PC-9 (cell line): ENCODE measurements at regions of chr10 and their contacts with region 1.

Region 1: DNA sequence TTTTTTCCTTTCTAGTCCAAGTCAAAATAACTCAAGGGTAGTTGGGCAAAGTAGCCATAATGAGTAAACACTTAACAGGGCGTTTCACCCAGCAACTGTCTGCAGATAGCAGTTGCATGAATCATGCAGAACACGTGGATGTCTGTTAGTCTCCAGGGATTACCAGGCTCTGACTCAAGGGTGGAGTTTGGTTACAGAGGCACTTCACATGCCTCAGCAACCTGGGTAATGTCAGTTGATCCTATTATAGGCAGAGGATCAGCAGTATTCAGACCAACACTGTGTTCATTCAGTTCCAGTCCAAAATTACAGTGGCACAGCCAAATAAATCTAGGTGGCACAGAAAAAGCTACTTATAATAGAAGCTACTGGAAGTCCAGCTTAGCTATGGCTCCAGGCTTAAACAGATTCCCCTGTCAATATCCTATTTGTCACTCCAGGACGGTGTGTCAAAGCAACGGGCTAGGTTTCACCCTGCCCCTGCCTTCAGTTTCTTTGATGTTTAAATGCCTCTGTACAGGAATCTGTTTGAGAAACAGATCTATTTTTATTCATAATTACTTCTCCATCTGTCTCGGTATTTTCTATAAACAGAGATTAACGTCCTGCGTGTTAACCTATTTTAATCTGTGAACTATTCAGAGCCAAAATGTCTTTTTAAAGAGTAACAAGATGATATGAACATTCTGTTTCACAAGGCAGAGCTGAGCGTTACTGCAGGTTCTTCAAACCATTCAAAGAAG is 162.7 kb upstream of the AKR1E2 start:
- DNase-seq: peak; percentile 75 to 94
- H3K4me3 ChIP-seq: peak overlapping the region; percentile 17; the same call in 1 of the 2 replicates
- H3K27ac ChIP-seq: peak overlapping the region; percentile 96
- H3K4me1 ChIP-seq: peaks cover 24% of the 10 kb centered on the region
- H3K27me3 ChIP-seq: no peaks in the 10 kb centered on the region
- CTCF ChIP-seq: no peak

Region 2: GRCh38 chr10:3887885-3888476 is 775.4 kb before region 1 on chr10:
- CTCF ChIA-PET with region 1: no interaction called
- POLR2A ChIA-PET with region 1: no interaction called
- intact Hi-C with region 1: loop called (anchors 2 kb)
- DNase-seq: peak; percentile 50 to 89
- H3K4me3 ChIP-seq: no peak overlapping the region
- H3K27ac ChIP-seq: peak overlapping the region; percentile 90
- H3K4me1 ChIP-seq: peaks cover 41% of the 10 kb centered on the region
- H3K27me3 ChIP-seq: no peaks in the 10 kb centered on the region
- CTCF ChIP-seq: no peak

Region 3: GRCh38 chr10:4260483-4261124 is 402.7 kb before region 1 on chr10:
- CTCF ChIA-PET with region 1: no interaction called
- POLR2A ChIA-PET with region 1: no interaction called
- intact Hi-C with region 1: no loop called
- DNase-seq: no peak
- H3K4me3 ChIP-seq: no peak overlapping the region
- H3K27ac ChIP-seq: no peak overlapping the region
- H3K4me1 ChIP-seq: no peaks in the 10 kb centered on the region
- H3K27me3 ChIP-seq: no peaks in the 10 kb centered on the region
- CTCF ChIP-seq: no peak

Region 4: DNA sequence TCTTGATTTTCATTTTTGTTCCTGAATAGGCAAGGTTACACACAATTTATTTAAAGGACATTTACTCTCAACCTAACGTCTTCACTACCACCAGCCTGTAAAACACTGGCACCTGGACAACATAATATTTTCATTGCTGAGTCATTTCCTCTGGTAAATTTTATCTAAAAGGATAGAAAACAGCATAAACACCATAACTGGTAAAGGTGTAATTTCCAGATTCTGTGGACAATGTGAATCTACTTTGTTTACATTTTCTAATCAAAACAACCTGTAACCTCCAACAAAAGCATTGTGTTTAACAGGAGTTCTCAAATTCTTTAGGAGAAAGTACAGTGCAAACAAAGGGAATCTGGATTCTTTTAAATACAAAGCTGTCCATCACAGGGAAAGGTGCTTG is 309.4 kb before region 1 on chr10:
- CTCF ChIA-PET with region 1: no interaction called
- POLR2A ChIA-PET with region 1: interaction called, 7 read pairs
- intact Hi-C with region 1: loop called (anchors 2 kb)
- DNase-seq: peak in 1 of 2 experiments; percentile 59
- H3K4me3 ChIP-seq: no peak overlapping the region
- H3K27ac ChIP-seq: peak overlapping the region; percentile 76
- H3K4me1 ChIP-seq: peaks cover 18% of the 10 kb centered on the region
- H3K27me3 ChIP-seq: no peaks in the 10 kb centered on the region
- CTCF ChIP-seq: no peak

Region 5: DNA sequence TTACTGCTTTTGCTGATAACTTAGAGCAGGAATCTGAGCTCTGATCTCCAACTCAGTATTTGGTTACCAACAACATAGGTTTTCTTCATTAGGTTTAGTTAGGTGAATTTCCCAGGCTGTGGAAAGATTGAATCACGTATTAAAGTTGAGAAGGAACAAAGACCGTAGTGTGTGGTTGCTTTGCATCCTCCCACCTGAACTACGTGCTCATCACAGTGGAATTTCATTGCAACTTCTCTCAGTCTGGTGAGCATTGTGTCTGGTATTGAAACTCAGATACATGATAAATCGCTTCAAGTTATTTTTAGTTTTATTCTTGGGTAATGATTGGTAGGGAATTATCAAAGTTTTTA is 23.3 kb after region 1 on chr10:
- CTCF ChIA-PET with region 1: interaction called, 6 read pairs
- POLR2A ChIA-PET with region 1: interaction called, 5 read pairs
- intact Hi-C with region 1: loop called (anchors 2 kb)
- DNase-seq: peak in 1 of 2 experiments; percentile 88
- H3K4me3 ChIP-seq: no peak overlapping the region
- H3K27ac ChIP-seq: peak overlapping the region; percentile 78
- H3K4me1 ChIP-seq: peaks cover 21% of the 10 kb centered on the region
- H3K27me3 ChIP-seq: no peaks in the 10 kb centered on the region
- CTCF ChIP-seq: no peak

Region 6: DNA sequence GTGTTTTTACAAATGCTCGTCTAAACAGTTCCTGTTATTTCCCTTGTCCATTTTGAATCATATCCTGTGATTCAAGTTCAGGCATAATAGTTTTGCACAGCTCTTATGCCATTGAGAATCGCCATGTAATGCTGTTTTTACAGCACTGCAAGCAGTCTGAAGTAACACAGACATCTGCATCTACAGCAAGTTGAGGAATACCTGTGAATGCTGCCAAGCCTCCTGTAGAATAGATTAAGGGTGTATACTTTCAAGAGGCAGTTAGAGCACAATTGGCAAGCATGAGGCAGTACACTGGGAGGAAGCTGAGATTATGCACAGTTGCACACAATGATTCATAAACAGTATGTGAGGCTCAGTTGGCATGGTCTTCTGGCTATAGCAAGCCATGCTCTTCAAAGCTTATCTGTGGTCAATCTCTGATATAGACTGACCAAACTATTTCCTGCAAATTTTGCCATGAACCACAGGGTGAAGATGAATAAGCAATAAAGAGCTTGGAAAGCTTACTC is 40.8 kb after region 1 on chr10:
- CTCF ChIA-PET with region 1: no interaction called
- POLR2A ChIA-PET with region 1: no interaction called
- intact Hi-C with region 1: loop called (anchors 5 kb)
- DNase-seq: peak; percentile 61 to 93
- H3K4me3 ChIP-seq: no peak overlapping the region
- H3K27ac ChIP-seq: peak overlapping the region; percentile 71
- H3K4me1 ChIP-seq: peaks cover 16% of the 10 kb centered on the region
- H3K27me3 ChIP-seq: no peaks in the 10 kb centered on the region
- CTCF ChIP-seq: no peak

Region 7: GRCh38 chr10:4733151-4733842 is 70.0 kb after region 1 on chr10:
- CTCF ChIA-PET with region 1: no interaction called
- POLR2A ChIA-PET with region 1: no interaction called
- intact Hi-C with region 1: loop called (anchors 2 kb)
- DNase-seq: peak; percentile 67 to 71
- H3K4me3 ChIP-seq: no peak overlapping the region
- H3K27ac ChIP-seq: peak overlapping the region; percentile 70
- H3K4me1 ChIP-seq: peaks cover 16% of the 10 kb centered on the region
- H3K27me3 ChIP-seq: no peaks in the 10 kb centered on the region
- CTCF ChIP-seq: no peak